ENCODE measurements at regions of chr1 and their contacts with region 1.

Region 1: GRCh38 chr1:39653546-39654031 is 14.1 kb upstream of the HEYL start:
- DNase-seq: no peak
- H3K4me3 ChIP-seq: no peak overlapping the region
- CTCF ChIP-seq: peak; percentile 87

Region 2: DNA sequence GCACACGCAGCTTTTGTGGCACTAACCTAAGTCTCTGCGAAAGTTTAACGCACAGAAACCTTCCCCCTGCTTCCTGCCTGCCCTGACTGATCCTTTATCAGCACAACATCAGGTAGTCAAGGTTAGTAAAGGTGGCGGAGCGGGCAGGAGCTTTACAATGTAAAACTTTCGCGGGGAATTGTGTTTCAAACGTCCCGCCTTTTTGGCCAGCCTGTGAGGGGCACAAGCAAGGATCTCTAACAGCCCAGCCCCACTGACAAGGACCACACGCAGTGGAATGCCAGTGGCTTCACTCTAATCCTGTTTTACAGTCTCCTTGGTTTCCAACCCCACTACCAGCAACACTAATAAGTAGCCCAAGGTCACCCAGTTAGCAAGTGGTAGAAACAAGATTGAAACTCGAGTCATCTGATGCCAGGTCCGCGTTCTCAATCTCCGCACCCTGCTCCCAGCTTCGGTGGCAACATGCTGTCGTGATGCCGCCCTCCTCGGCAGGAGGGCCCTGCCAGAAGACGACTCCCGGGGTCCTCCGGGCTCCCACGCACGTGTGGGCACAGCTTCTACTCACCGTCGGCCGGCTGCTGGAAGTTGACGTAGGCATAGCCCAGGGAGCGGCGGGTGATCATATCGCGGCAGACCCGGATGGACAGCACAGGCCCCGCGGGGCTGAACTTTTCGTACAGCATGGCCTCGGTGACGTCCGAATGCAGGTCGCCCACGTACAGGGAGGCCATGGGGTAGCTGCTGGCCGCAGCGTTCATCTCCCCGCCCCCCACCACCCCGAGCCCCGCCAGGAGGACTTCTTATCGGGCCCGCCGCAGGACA is 78.2 kb before region 1 on chr1:
- CTCF ChIA-PET with region 1: interaction called, 14 read pairs
- POLR2A ChIA-PET with region 1: no interaction called
- DNase-seq: no peak
- H3K4me3 ChIP-seq: peak overlapping the region; percentile 78
- CTCF ChIP-seq: no peak

Region 3: GRCh38 chr1:39617488-39618049 is 36.0 kb before region 1 on chr1:
- CTCF ChIA-PET with region 1: interaction called, 670 read pairs
- POLR2A ChIA-PET with region 1: no interaction called
- DNase-seq: no peak
- H3K4me3 ChIP-seq: no peak overlapping the region
- CTCF ChIP-seq: no peak

Region 4: GRCh38 chr1:39639305-39640130 is 14.1 kb before region 1 on chr1 and contains the start of gene HEYL:
- CTCF ChIA-PET with region 1: interaction called, 44 read pairs
- POLR2A ChIA-PET with region 1: no interaction called
- DNase-seq: no peak
- H3K4me3 ChIP-seq: peak within 1 kb of the TSS; percentile 33
- CTCF ChIP-seq: peak; percentile 35

Region 5: DNA sequence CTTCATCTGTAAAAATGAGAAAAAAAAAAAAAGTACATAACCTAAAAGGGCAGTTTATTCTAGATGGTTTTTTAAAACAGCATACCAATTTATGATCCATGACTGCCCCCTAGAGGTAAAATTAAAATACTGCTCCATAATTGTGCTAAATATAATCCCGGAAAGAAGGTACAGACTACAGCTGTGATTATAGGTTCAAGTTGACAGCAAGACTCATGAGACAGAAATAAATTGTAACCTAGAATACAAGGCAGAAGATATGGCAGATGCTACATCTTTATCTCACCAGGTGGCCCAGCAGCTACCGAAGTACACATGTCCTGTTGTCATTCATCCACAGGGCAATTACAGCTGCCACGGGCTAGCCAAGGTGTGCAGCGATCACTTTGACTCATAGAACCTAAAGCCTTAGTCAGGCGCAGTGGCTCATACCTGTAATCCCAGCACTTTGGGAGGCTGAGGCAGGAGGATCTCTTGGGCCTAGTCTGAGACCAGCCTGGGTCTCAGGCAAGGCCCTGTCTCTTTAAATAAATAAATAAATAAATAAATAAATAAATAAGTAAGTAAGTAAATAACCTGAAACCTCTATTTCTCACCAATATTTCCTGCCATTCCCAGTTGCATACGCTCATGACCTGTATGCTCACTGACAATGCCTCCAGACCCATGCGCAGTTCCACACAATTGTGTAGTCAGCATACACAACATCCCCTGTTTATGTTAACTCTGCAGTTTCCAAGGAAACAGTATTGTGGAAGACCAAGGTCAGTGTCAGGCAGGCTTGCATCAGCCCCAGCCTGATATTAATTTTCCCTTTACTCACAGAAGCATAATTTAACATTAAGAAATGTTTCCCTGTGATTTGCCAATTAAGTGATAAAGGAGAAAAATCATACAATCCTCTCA is 66.8 kb after region 1 on chr1:
- CTCF ChIA-PET with region 1: interaction called, 12 read pairs
- POLR2A ChIA-PET with region 1: no interaction called
- DNase-seq: no peak
- H3K4me3 ChIP-seq: no peak overlapping the region
- CTCF ChIP-seq: peak; percentile 28

Measured in AG04449 (cell line).